ENCODE measurements at regions of chr17 and their contacts with region 1.

Region 1: DNA sequence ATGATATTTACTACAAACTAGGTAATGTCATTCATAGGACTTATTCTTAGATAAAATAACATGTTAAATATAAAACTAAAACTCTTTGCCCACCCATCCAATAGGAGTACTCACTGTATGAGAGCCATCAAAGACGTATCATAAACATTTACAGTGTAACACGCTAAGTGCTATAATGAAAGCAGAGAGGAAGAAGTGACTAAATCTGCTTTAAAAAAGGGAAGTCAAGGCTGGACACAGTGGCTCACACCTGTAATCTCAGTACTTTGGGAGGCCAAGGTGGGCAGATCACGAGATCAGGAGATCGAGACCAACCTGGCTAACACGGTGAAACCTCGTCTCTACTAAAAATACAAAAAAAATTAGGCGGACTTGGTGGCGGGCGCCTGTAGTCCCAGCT is 32.4 kb downstream of the SPAG9 start:
- DNase-seq: no peak
- H3K4me3 ChIP-seq: no peak overlapping the region
- H3K27ac ChIP-seq: 0 out of 2 replicates have a peak overlapping the region, but pooled peaks have one; percentile 5
- H3K4me1 ChIP-seq: peaks cover 27% of the 10 kb centered on the region
- H3K27me3 ChIP-seq: no peaks in the 10 kb centered on the region
- CTCF ChIP-seq: no peak

Region 2: DNA sequence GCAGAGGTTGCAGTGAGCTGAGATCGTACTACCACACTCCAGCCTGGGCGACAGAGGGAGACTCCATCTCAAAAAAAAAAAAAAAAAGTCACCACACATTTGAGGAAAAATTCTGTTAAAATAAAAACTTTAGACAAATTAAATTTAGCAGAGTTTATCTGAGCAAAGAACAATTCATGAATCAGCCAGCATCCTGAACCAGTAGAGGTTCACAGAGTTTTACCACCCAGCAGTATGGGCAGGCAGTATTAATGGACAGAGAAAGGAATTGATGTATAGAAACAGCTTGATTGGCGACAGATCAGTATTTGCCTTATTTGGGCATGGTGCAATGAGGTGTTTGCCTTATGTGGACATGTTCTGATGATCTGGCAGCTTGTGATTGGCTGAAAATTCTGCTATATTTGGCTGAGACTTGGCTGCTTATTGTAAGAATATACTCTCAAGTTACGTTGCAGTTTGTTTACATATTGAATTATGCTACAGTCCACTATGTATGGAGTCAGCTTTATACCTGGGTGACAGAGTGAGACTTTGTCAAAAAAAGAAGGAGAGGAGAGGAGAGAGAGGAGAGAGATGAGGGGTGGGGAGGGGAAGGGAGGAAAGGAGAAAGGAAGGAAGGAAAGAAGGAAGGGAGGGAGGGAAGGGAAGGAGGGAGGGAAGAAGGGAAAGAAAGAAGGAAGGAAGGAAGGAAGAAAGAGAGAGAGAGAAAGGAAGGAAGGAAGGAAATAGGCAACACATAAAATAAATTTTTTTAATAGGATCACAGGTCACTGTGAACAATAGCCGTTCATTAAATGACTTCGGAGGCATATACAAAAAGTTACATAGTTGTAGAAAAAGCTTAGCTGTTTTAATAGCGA is 439.0 kb before region 1 on chr17:
- CTCF ChIA-PET with region 1: no interaction called
- POLR2A ChIA-PET with region 1: interaction called, 17 read pairs
- intact Hi-C with region 1: no loop called
- DNase-seq: peak in 1 of 2 experiments; percentile 80
- H3K4me3 ChIP-seq: no peak overlapping the region
- H3K27ac ChIP-seq: peak overlapping the region; percentile 38
- H3K4me1 ChIP-seq: 0 out of 2 replicates have a peak, but pooled peaks cover 12% of the 10 kb centered on the region
- H3K27me3 ChIP-seq: no peaks in the 10 kb centered on the region
- CTCF ChIP-seq: no peak

Measured in PC-9 (cell line).